ENCODE measurements at regions of chr2 and their contacts with region 1.

Region 1: DNA sequence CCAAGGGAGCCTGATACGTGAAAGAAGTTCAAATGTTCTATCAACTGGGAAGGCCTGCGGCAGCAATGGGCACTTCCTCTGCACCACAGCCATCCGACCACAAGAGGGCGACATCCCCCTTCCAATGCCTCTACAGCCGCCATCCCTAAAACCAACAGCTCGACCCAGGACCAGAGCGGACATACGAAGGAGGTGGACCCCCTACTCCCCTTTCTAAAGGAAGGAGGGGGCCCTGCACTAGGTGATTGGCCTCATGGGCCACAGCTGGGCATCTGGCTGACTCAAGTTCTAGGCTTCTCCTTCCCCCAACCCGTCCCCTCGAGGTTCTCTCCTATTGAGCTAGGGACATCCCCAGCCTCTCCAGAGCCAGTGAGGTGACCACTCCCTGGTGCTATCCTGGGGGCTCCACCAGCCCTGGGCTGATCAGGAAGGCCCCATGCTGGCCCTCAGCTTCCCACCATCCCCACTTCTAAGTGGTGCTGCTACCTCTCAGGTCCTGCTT is 217.2 kb downstream of the TNS1 start:
- DNase-seq: peak; percentile 56 to 82 (median 66)
- ATAC-seq: peak; percentile 61
- H3K4me3 ChIP-seq: no peak overlapping the region
- H3K4me3 Mint-ChIP-seq: peak overlapping the region; percentile 2
- H3K27ac ChIP-seq: no peak overlapping the region
- H3K27ac Mint-ChIP-seq: no peak overlapping the region
- H3K4me1 ChIP-seq: peaks cover 28% of the 10 kb centered on the region
- H3K4me1 Mint-ChIP-seq: peaks cover 27% of the 10 kb centered on the region
- H3K27me3 ChIP-seq: no peaks in the 10 kb centered on the region
- H3K27me3 Mint-ChIP-seq: no peaks in the 10 kb centered on the region
- CTCF ChIP-seq: peak; percentile 80

Region 2: DNA sequence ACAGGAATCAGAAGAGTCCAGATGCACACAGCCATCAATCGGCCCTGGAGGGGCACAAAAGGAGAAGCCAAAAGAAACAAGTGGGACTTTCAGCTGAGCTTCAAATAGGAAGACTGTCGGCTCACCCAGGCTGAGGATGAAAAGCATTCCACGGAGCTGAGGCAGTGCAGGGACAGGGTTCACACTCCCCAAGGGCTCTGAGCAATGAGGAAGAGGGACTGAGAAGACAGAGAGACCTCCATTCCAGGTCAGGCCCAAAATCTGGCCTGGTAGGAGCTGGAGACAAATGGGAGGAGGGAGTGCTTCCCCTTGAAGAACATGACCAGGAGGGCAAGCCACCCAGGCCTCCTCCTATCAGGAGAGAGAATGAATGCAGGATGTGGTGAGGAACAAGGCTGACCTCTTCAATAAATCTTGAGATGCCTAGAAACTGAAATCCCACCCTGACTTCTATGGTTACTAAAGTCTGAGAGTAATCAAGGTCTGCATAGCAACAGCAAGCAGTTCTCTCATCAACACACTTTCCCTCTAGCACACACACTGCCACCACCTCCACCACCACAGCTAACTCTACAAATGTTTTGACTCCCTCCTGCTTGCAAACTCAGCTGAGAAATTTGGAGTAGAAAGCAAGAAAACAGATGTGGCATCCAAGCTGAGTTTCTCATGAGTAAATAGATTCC is 217.2 kb before region 1 on chr2:
- CTCF ChIA-PET with region 1: no interaction called
- POLR2A ChIA-PET with region 1: no interaction called
- intact Hi-C with region 1: no loop called
- DNase-seq: no peak
- ATAC-seq: no peak
- H3K4me3 ChIP-seq: no peak overlapping the region
- H3K4me3 Mint-ChIP-seq: no peak overlapping the region
- H3K27ac ChIP-seq: no peak overlapping the region
- H3K27ac Mint-ChIP-seq: no peak overlapping the region
- H3K4me1 ChIP-seq: no peaks in the 10 kb centered on the region
- H3K4me1 Mint-ChIP-seq: no peaks in the 10 kb centered on the region
- H3K27me3 ChIP-seq: no peaks in the 10 kb centered on the region
- H3K27me3 Mint-ChIP-seq: peaks cover 5% of the 10 kb centered on the region
- CTCF ChIP-seq: no peak

Region 3: GRCh38 chr2:217610401-217611075 is 175.1 kb before region 1 on chr2:
- CTCF ChIA-PET with region 1: no interaction called
- POLR2A ChIA-PET with region 1: no interaction called
- intact Hi-C with region 1: no loop called
- DNase-seq: peak in 13 of 14 experiments; percentile 10 to 66 (median 36)
- ATAC-seq: peak; percentile 79
- H3K4me3 ChIP-seq: no peak overlapping the region
- H3K4me3 Mint-ChIP-seq: peak overlapping the region; percentile 21
- H3K27ac ChIP-seq: peak overlapping the region; percentile 75 to 88
- H3K27ac Mint-ChIP-seq: peak overlapping the region; percentile 94
- H3K4me1 ChIP-seq: peaks cover 48% of the 10 kb centered on the region
- H3K4me1 Mint-ChIP-seq: peaks cover 60% of the 10 kb centered on the region
- H3K27me3 ChIP-seq: no peaks in the 10 kb centered on the region
- H3K27me3 Mint-ChIP-seq: no peaks in the 10 kb centered on the region
- CTCF ChIP-seq: no peak

Region 4: DNA sequence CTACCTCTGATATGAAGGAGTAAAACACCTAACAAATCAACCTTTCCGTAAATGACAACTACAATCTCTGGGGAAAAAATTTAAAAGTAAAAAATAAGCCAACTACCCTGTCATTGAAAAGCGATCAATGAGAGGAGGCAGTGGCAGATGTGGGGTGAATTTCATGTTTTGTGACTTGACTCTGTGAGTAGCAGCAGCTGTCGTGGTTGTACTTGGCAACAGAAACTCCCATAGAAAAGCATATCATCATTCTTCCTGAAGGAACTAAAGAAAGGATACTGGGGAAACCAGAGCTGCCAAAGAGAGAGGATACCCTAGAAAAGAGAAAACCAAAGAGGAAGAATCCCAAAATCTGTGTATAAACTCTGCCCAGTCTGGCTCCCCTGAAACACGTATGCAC is 19.2 kb before region 1 on chr2:
- CTCF ChIA-PET with region 1: no interaction called
- POLR2A ChIA-PET with region 1: no interaction called
- intact Hi-C with region 1: no loop called
- DNase-seq: no peak
- ATAC-seq: no peak
- H3K4me3 ChIP-seq: no peak overlapping the region
- H3K4me3 Mint-ChIP-seq: no peak overlapping the region
- H3K27ac ChIP-seq: no peak overlapping the region
- H3K27ac Mint-ChIP-seq: no peak overlapping the region
- H3K4me1 ChIP-seq: no peaks in the 10 kb centered on the region
- H3K4me1 Mint-ChIP-seq: no peaks in the 10 kb centered on the region
- H3K27me3 ChIP-seq: no peaks in the 10 kb centered on the region
- H3K27me3 Mint-ChIP-seq: peaks cover 9% of the 10 kb centered on the region
- CTCF ChIP-seq: no peak

Region 5: DNA sequence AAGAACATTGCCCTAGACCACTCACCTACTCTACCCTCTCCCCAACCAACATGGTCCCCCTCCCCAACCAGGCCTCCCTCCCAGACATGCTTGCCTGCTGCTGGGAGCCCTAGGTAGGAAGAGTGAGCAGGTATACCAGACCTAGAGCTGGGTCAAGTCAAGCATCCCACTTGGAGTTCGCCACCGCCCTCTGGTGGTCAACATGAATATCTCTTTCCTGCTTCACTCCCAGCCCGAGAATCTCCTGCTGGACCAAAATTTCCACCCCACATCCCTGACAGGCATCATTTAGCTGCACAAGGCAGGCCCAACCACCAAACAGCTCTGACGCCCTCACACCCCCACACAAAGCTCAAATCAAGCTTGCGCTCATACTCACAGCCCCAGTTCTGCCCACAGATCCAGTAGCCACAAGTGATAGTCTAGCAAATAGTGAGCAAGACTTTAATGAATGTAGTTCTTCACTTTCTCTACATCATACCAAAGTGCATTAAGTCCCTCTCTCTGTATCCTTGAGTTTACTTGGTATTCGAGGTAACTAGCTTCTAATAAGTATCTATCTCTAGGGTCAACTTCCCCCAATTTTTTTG is 101.2 kb after region 1 on chr2:
- CTCF ChIA-PET with region 1: interaction called, 11 read pairs
- POLR2A ChIA-PET with region 1: no interaction called
- intact Hi-C with region 1: loop called (anchors 1 kb)
- DNase-seq: peak; percentile 26 to 75 (median 48)
- ATAC-seq: peak; percentile 37
- H3K4me3 ChIP-seq: no peak overlapping the region
- H3K4me3 Mint-ChIP-seq: no peak overlapping the region
- H3K27ac ChIP-seq: no peak overlapping the region
- H3K27ac Mint-ChIP-seq: no peak overlapping the region
- H3K4me1 ChIP-seq: peaks cover 3% of the 10 kb centered on the region
- H3K4me1 Mint-ChIP-seq: no peaks in the 10 kb centered on the region
- H3K27me3 ChIP-seq: peaks cover 0 to 4% of the 10 kb centered on the region in 2 experiments
- H3K27me3 Mint-ChIP-seq: peaks cover 4% of the 10 kb centered on the region
- CTCF ChIP-seq: peak; percentile 71

Region 6: GRCh38 chr2:217988014-217988839 is 202.6 kb after region 1 on chr2:
- CTCF ChIA-PET with region 1: no interaction called
- POLR2A ChIA-PET with region 1: no interaction called
- intact Hi-C with region 1: loop called in 1 of 2 experiments (anchors 2 kb)
- DNase-seq: peak; percentile 23 to 68 (median 42)
- ATAC-seq: peak; percentile 44
- H3K4me3 ChIP-seq: no peak overlapping the region
- H3K4me3 Mint-ChIP-seq: no peak overlapping the region
- H3K27ac ChIP-seq: no peak overlapping the region
- H3K27ac Mint-ChIP-seq: no peak overlapping the region
- H3K4me1 ChIP-seq: no peaks in the 10 kb centered on the region
- H3K4me1 Mint-ChIP-seq: no peaks in the 10 kb centered on the region
- H3K27me3 ChIP-seq: no peaks in the 10 kb centered on the region
- H3K27me3 Mint-ChIP-seq: peaks cover 7% of the 10 kb centered on the region
- CTCF ChIP-seq: peak; percentile 68

Region 7: DNA sequence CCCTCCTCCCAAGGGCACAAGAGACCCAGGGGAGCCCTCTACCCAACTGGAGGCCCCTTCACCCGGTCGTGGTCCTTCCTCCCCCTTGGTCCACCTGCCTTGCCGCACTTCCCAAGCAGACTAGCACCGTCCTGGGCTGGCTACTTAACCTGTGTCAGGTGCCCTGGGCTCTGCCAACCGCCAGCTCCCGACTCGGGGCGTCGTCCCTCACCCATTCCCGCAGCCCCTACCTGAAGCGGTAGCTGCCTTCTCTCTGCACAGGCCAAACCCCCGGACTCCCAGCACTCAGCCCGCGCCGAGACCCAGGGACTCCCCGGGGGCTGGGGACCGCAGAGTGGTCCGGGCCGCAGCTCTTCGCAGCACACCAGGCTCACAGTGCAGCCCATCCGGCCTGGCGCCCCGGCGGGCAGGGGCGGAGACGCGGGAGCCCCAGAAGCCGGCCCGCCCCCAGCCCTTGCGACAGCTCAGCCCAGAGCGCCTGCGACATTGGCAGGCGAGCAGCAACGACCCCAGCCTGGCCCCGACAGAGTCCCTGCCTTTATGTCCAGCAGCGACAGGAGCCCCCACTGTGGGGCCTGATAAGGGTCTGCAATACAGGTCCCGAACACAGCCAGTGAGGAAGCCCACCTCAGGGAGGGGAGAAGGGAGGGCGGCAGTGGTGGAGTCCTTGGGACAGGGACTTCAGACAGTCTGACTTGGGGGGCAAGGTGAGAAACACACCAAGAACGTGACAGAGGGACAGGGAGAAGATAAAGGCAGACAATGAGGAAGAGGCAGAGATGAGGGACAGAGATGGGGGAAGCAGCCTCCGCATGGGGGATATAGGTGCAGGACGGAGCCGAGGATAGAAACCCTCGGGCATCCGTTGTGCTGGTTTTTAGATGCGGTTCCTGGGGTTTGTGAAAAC is 248.2 kb after region 1 on chr2:
- CTCF ChIA-PET with region 1: interaction called, 5 read pairs
- POLR2A ChIA-PET with region 1: no interaction called
- intact Hi-C with region 1: loop called (anchors 2 kb)
- DNase-seq: peak in 2 of 14 experiments; percentile 23 to 27
- ATAC-seq: no peak
- H3K4me3 ChIP-seq: peak overlapping the region; percentile 46
- H3K4me3 Mint-ChIP-seq: peak overlapping the region; percentile 76
- H3K27ac ChIP-seq: no peak overlapping the region
- H3K27ac Mint-ChIP-seq: peak overlapping the region; percentile 22
- H3K4me1 ChIP-seq: peaks cover 19% of the 10 kb centered on the region
- H3K4me1 Mint-ChIP-seq: peaks cover 11% of the 10 kb centered on the region
- H3K27me3 ChIP-seq: peaks cover 0 to 4% of the 10 kb centered on the region in 2 experiments
- H3K27me3 Mint-ChIP-seq: peaks cover 7% of the 10 kb centered on the region
- CTCF ChIP-seq: no peak

Region 8: GRCh38 chr2:218063486-218063885 is 277.9 kb after region 1 on chr2:
- CTCF ChIA-PET with region 1: interaction called, 5 read pairs
- POLR2A ChIA-PET with region 1: no interaction called
- intact Hi-C with region 1: loop called (anchors 1 kb)
- DNase-seq: peak in 3 of 14 experiments; percentile 15 to 60 (median 58)
- ATAC-seq: peak; percentile 8
- H3K4me3 ChIP-seq: no peak overlapping the region
- H3K4me3 Mint-ChIP-seq: no peak overlapping the region
- H3K27ac ChIP-seq: no peak overlapping the region
- H3K27ac Mint-ChIP-seq: no peak overlapping the region
- H3K4me1 ChIP-seq: peaks cover 2% of the 10 kb centered on the region
- H3K4me1 Mint-ChIP-seq: peaks cover under 1% of the 10 kb centered on the region
- H3K27me3 ChIP-seq: peaks cover 8 to 10% of the 10 kb centered on the region in 2 experiments
- H3K27me3 Mint-ChIP-seq: peaks cover 30% of the 10 kb centered on the region
- CTCF ChIP-seq: no peak

Region 9: GRCh38 chr2:218194880-218195279 is 409.3 kb after region 1 on chr2:
- CTCF ChIA-PET with region 1: no interaction called
- POLR2A ChIA-PET with region 1: no interaction called
- intact Hi-C with region 1: no loop called
- DNase-seq: no peak
- ATAC-seq: no peak
- H3K4me3 ChIP-seq: no peak overlapping the region
- H3K4me3 Mint-ChIP-seq: no peak overlapping the region
- H3K27ac ChIP-seq: no peak overlapping the region
- H3K27ac Mint-ChIP-seq: no peak overlapping the region
- H3K4me1 ChIP-seq: no peaks in the 10 kb centered on the region
- H3K4me1 Mint-ChIP-seq: no peaks in the 10 kb centered on the region
- H3K27me3 ChIP-seq: peaks cover 0 to 2% of the 10 kb centered on the region in 2 experiments
- H3K27me3 Mint-ChIP-seq: no peaks in the 10 kb centered on the region
- CTCF ChIP-seq: no peak

Measured in CD4-positive, alpha-beta T cell (primary cell).